ENCODE measurements at regions of chr6 and their contacts with region 1.

Region 1: GRCh38 chr6:158475344-158476302 is 84.3 kb upstream of the TMEM181 start:
- DNase-seq: peak; percentile 84
- CTCF ChIP-seq: no peak

Region 2: GRCh38 chr6:158231551-158232315 is 243.9 kb before region 1 on chr6:
- in situ Hi-C with region 1: loop called (anchors 25 kb)
- DNase-seq: peak; percentile 94
- CTCF ChIP-seq: no peak

Region 3: DNA sequence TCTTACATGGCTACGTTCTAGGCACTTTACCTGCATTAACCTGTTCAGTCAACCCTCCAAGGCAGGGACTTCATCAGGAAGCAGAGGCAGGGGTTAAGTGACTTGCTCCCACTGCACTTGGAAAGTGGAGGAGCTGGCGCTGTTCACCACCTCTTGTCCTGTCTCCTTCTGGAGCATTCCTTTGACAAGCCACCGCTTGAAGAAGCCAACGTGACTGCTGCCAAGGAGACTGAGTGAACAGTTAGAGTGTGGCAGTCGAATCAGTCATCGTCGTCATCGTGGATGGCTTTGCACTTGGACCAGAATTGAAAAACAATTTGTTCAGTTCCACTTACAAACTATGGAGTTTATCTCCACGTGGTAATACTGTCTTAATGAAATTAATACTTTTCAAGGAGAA is 102.4 kb before region 1 on chr6:
- in situ Hi-C with region 1: no loop called
- DNase-seq: no peak
- CTCF ChIP-seq: no peak